Right ventricle myocardium superior (tissue), 1 donor: ENCODE measurements at regions of chr6 and their contacts with region 1.

Region 1: DNA sequence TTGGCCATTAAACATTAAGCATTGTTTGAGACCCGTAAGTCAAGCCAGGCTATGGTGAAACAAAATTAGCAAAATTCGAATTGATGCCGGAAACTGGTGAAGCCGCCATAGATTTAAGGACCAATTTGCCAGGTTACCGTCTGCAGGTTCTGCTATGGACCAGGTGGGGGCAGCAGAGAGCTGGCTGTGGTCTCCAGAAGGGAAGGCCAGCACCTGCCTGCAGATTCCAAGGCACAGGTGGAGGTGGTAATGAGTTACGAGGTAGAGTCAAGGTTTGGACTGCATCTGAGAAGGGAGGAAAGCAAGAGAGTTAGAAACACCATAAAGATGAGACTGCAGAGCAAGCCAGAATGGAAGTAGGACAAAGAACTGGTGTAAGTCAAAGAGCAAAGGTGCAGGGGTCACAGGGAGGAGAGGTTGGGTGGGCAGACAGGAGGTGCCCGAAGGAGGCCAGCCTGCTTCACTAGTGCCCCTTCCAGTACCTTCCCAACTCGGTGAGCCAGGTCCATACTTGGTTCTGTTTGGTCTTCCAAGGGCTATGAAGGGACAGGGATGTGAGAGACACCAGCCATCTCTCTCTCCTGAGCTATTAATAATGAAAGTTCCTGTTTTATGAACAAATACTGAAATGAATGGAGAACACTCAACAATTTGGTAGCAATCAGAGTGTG is 131.6 kb upstream of the ESR1 start:
- DNase-seq: no peak
- ATAC-seq: peak; percentile 60

Region 2: GRCh38 chr6:152117156-152118133 is 441.6 kb after region 1 on chr6:
- intact Hi-C with region 1: loop called (anchors 10 kb)
- DNase-seq: no peak
- ATAC-seq: no peak